ENCODE measurements at regions of chr1 and their contacts with region 1.

Region 1: GRCh38 chr1:201268604-201269151 is 14.6 kb upstream of the PKP1 start:
- DNase-seq: no peak
- H3K4me3 ChIP-seq: no peak overlapping the region
- H3K4me3 Mint-ChIP-seq: no peak overlapping the region
- H3K27ac Mint-ChIP-seq: no peak overlapping the region
- H3K4me1 ChIP-seq: no peaks in the 10 kb centered on the region
- H3K4me1 Mint-ChIP-seq: no peaks in the 10 kb centered on the region
- H3K27me3 ChIP-seq: no peaks in the 10 kb centered on the region; the same call in none of the 2 replicates
- H3K27me3 Mint-ChIP-seq: peaks cover 24% of the 10 kb centered on the region
- CTCF ChIP-seq: no peak

Region 2: GRCh38 chr1:201309426-201309825 is 40.7 kb after region 1 on chr1:
- CTCF ChIA-PET with region 1: no interaction called
- POLR2A ChIA-PET with region 1: no interaction called
- intact Hi-C with region 1: loop called (anchors 5 kb)
- DNase-seq: peak; percentile 84
- H3K4me3 ChIP-seq: no peak overlapping the region
- H3K4me3 Mint-ChIP-seq: no peak overlapping the region
- H3K27ac Mint-ChIP-seq: no peak overlapping the region
- H3K4me1 ChIP-seq: peaks cover 27% of the 10 kb centered on the region
- H3K4me1 Mint-ChIP-seq: peaks cover 8% of the 10 kb centered on the region
- H3K27me3 ChIP-seq: no peaks in the 10 kb centered on the region
- H3K27me3 Mint-ChIP-seq: peaks cover 5% of the 10 kb centered on the region
- CTCF ChIP-seq: peak; percentile 26 to 70

Region 3: DNA sequence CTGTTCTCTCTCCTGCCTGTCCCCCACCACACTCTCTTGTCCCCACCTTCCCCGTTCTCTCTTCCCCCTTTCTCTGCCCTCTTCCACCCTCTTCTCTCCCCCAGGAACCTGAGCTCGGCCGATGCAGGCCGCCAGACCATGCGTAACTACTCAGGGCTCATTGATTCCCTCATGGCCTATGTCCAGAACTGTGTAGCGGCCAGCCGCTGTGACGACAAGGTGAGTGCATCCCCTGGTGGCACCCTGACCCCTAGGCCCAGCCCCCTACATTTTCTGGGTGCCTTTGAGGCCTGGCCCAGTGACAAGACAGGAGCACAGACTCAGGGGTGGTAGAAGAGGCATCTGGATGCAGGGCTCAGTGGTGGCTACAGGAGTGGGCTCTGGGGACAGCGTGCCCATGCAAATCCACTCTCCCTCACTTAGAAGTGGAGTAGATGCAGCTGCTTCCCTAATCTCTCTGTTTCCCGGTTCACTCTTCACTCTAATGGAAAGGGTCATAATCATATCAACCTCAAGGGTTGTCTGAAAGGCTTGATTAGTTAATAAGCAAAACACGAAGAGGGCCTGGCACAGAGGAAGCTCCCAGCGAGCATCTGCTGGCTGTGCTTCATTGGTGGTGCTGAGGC is 51.6 kb after region 1 on chr1:
- CTCF ChIA-PET with region 1: no interaction called
- POLR2A ChIA-PET with region 1: no interaction called
- intact Hi-C with region 1: no loop called
- DNase-seq: no peak
- H3K4me3 ChIP-seq: no peak overlapping the region
- H3K4me3 Mint-ChIP-seq: no peak overlapping the region
- H3K27ac Mint-ChIP-seq: no peak overlapping the region
- H3K4me1 ChIP-seq: no peaks in the 10 kb centered on the region
- H3K4me1 Mint-ChIP-seq: no peaks in the 10 kb centered on the region
- H3K27me3 ChIP-seq: peaks cover 3% of the 10 kb centered on the region
- H3K27me3 Mint-ChIP-seq: peaks cover 11% of the 10 kb centered on the region
- CTCF ChIP-seq: no peak

Measured in Caco-2 (cell line).